H1 (cell line): ENCODE measurements at regions of chr19 and their contacts with region 1.

Region 1: GRCh38 chr19:50368649-50369570 is 3.5 kb upstream of the NAPSA start:
- DNase-seq: peak in 1 of 2 experiments; percentile 95
- H3K4me3 ChIP-seq: peak overlapping the region; percentile 54 to 72 (median 68)
- H3K27ac ChIP-seq: no peak overlapping the region
- H3K4me1 ChIP-seq: no peaks in the 10 kb centered on the region; a peak in 2 of 7 replicates
- H3K27me3 ChIP-seq: no peaks in the 10 kb centered on the region; a peak in 1 of 7 replicates
- CTCF ChIP-seq: peak; percentile 70 to 92 (median 85)
- EP300 ChIP-seq: no peak; a peak in 1 of 3 replicates
- POLR2A ChIP-seq: 0 out of 3 replicates have a peak, but pooled peaks of 1 of the 2 experiments have one; percentile 23
- RAD21 ChIP-seq: peak; percentile 86 to 88

Region 2: DNA sequence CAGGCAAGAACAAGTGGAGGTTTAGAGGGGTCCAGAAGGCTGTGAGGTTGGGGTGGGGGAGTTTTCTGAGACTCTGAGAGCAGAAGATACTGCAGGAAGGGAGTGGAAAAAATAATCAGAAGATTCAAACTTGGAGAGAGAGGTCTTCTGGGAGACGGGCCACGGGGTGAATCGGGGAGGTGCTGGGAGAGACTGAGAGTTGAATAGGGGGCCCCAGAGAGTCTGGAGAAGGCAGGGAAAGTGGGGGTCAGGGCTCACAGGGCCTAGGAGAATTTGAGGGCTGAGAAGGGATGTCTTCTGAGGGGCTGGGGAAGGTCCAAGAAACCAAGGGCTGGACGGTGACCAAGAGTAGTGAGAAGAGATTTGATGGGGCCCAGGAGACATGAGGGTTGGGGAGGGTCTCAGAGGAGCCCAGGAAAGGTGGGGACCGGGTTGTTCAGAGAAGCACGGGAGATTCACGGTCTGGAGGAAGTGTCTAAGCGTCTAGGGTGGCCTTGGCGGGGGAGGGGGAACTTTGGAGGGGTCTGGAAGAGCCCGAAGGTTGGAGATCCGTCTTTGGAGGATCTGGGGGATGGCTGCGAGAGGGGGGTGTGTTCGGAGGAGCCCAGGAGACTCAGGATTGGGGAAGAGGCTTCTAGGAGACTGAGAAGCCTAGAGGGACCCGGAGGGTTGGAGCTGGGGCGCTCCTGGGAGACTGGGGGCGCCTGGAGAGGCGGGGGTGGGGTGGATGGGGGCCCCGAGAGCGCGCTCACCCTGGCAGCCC is 41.3 kb before region 1 on chr19:
- CTCF ChIA-PET with region 1: no interaction called
- POLR2A ChIA-PET with region 1: no interaction called
- DNase-seq: no peak
- H3K4me3 ChIP-seq: peak overlapping the region in 2 of 4 experiments; percentile 53 to 68; a peak in 4 of 8 replicates
- H3K27ac ChIP-seq: no peak overlapping the region
- H3K4me1 ChIP-seq: peaks cover 2 to 28% (median 13%) of the 10 kb centered on the region in 4 experiments
- H3K27me3 ChIP-seq: peaks cover 5 to 15% (median 12%) of the 10 kb centered on the region in 4 experiments; a peak in 6 of 7 replicates
- CTCF ChIP-seq: no peak
- EP300 ChIP-seq: no peak
- POLR2A ChIP-seq: no peak
- RAD21 ChIP-seq: no peak

Region 3: DNA sequence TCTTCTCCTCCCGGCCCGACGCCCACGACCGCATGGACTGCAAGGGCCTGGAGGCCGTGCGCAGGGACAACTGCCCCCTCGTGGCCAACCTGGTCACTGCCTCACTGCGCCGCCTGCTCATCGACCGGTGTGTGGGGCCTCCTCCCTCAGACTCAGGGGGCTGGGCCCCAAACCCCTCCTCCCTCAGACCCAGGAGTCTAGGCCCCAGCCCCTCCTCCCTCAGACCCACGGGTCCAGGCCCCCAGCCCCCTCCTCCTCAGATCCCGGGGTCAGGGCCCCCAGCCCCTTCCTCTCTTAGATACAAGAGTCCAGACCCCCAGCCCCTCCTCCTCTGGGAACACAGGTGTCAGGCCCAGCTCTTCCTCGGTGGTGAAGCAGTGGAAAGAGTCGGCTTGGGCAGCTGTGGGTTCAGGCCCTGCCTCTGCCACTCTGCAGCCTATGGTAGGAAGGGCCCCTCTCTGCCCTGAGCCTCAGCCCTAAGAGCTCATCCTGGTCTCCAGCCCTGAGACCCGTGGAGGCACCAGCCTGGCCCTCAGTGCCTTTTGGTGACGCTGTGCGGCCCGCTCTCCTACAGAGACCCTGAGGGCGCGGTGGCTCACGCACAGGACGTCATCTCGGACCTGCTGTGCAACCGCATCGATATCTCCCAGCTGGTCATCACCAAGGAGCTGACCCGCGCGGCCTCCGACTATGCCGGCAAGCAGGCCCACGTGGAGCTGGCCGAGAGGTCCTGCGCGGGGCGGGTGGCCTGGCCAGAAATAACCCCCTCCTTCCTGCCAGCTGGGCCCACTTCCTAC is 46.2 kb after region 1 on chr19:
- CTCF ChIA-PET with region 1: interaction called, 22 read pairs
- POLR2A ChIA-PET with region 1: interaction called, 5 read pairs
- DNase-seq: peak; percentile 79 to 98
- H3K4me3 ChIP-seq: no peak overlapping the region
- H3K27ac ChIP-seq: no peak overlapping the region; the same call in 1 of the 2 replicates
- H3K4me1 ChIP-seq: peaks cover 0 to 20% (median 12%) of the 10 kb centered on the region in 4 experiments; a peak in 6 of 7 replicates
- H3K27me3 ChIP-seq: peaks cover 0 to 2% (median 0%) of the 10 kb centered on the region in 4 experiments; a peak in 1 of 7 replicates
- CTCF ChIP-seq: peak; percentile 94 to 99 (median 95)
- EP300 ChIP-seq: no peak
- POLR2A ChIP-seq: no peak
- RAD21 ChIP-seq: peak; percentile 65 to 76

Region 4: DNA sequence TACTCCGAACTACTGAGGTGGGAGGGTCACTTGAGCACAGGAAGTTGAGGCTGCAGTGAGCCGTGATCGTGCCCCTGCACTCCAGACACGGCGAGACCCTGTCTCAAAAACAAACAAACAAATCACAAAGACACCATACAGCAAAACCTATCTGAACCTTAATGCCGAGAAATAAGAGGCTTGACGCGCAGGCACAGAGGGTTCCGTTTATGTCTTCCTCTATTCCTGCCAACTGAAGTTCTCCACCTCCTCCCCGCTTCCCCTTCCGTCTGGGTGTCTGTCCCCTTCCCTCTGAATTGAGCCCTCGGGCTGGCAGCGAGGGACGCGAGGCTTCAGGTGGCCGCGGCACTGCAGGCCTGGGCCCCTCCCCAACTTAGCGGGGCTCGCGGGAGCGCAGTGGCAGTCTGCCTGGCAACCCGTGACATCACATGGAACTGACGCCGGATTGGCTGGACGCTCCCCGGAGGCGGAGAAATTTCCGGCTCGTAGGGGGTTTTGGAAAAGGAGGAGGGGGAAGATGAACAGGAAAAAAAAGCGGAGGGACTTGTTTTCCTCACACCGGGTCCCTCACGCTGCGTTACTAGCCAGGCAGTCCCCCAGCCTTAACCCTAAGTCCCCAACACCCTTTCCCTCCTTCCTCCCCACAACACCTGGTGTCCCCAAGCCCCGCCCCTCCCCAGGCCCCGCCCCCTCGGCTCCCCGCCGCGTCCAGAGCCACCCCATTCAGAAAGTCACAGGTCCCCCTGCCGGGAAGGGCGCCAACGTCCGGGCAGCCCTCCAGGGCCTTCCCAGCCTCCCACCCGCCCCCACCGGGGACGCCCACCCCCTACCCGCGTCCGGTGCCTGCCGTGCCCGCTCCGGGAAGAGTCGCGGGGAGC is 62.7 kb after region 1 on chr19:
- CTCF ChIA-PET with region 1: interaction called, 10 read pairs
- POLR2A ChIA-PET with region 1: no interaction called
- DNase-seq: peak; percentile 66 to 99
- H3K4me3 ChIP-seq: peak overlapping the region; percentile 52 to 74 (median 62)
- H3K27ac ChIP-seq: peak overlapping the region; percentile 62; the same call in 1 of the 2 replicates
- H3K4me1 ChIP-seq: peaks cover 2 to 18% (median 13%) of the 10 kb centered on the region in 4 experiments
- H3K27me3 ChIP-seq: peaks cover 0 to 19% (median 8%) of the 10 kb centered on the region in 4 experiments; a peak in 4 of 7 replicates
- CTCF ChIP-seq: no peak
- EP300 ChIP-seq: peak in 1 of 2 experiments; percentile 37; a peak in 1 of 3 replicates
- POLR2A ChIP-seq: peak in 1 of 2 experiments; percentile 63; a peak in 2 of 3 replicates
- RAD21 ChIP-seq: no peak

Region 5: DNA sequence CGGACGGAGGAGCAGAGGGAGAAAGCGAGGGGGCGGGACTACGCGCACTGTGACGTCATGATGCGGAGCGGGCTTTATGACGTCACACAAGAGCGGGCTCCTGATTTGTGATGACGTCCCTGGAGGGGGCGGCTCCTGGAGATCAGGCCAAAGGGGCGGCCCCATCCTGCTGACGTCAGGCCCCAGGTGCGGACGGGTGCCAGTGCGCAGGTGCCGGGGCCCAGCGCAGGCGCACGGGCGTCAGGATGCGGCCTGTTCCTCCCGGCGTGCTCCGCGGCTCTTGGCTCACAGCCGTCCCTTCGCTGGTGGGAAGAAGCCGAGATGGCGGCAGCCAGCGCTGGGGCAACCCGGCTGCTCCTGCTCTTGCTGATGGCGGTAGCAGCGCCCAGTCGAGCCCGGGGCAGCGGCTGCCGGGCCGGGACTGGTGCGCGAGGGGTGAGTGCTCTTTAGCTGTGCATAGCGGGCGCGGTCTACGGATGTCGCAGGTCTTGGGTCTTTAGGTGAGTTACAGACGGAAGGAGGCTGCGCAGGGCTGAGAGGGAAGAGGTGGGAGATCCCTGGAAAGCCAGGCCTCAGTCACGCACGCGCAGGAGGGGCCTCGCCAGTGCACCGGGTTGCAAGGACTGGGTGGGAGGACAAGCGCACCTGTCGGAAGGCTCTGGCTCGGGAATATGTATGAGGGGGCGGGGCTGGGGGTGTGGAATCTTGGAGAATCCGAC is 107.5 kb after region 1 on chr19 and contains the starts of genes EMC10 and GARIN5A:
- CTCF ChIA-PET with region 1: interaction called, 18 read pairs
- POLR2A ChIA-PET with region 1: interaction called, 5 read pairs
- DNase-seq: peak; percentile 93 to 98
- H3K4me3 ChIP-seq: peak within 1 kb of the TSS; percentile 79 to 92 (median 85)
- H3K27ac ChIP-seq: peak within 1 kb of the TSS; percentile 86
- H3K4me1 ChIP-seq: no peaks in the 10 kb centered on the region
- H3K27me3 ChIP-seq: no peaks in the 10 kb centered on the region; a peak in 1 of 7 replicates
- CTCF ChIP-seq: peak in 1 of 3 experiments; percentile 5; a peak in 1 of 4 replicates
- EP300 ChIP-seq: no peak
- POLR2A ChIP-seq: peak in 1 of 2 experiments; percentile 92; a peak in 2 of 3 replicates
- RAD21 ChIP-seq: no peak
- total RNA-seq, gene EMC10: 103 and 105 TPM in 2 replicates
- total RNA-seq, gene GARIN5A: 8.1 and 9.1 TPM in 2 replicates

Region 6: GRCh38 chr19:50531118-50531612 is 162.3 kb after region 1 on chr19:
- CTCF ChIA-PET with region 1: no interaction called
- POLR2A ChIA-PET with region 1: no interaction called
- DNase-seq: no peak
- H3K4me3 ChIP-seq: no peak overlapping the region
- H3K27ac ChIP-seq: no peak overlapping the region
- H3K4me1 ChIP-seq: peaks cover 0 to 5% (median 1%) of the 10 kb centered on the region in 4 experiments; a peak in 3 of 7 replicates
- H3K27me3 ChIP-seq: no peaks in the 10 kb centered on the region; a peak in 1 of 7 replicates
- CTCF ChIP-seq: no peak
- EP300 ChIP-seq: no peak
- POLR2A ChIP-seq: no peak
- RAD21 ChIP-seq: no peak